ENCODE measurements at regions of chr11 and their contacts with region 1.

Region 1: GRCh38 chr11:85783758-85784157 is 27.2 kb downstream of the SYTL2 start:
- DNase-seq: no peak
- H3K4me3 ChIP-seq: no peak overlapping the region
- H3K27ac ChIP-seq: no peak overlapping the region
- H3K4me1 ChIP-seq: no peaks in the 10 kb centered on the region
- CTCF ChIP-seq: no peak

Region 2: DNA sequence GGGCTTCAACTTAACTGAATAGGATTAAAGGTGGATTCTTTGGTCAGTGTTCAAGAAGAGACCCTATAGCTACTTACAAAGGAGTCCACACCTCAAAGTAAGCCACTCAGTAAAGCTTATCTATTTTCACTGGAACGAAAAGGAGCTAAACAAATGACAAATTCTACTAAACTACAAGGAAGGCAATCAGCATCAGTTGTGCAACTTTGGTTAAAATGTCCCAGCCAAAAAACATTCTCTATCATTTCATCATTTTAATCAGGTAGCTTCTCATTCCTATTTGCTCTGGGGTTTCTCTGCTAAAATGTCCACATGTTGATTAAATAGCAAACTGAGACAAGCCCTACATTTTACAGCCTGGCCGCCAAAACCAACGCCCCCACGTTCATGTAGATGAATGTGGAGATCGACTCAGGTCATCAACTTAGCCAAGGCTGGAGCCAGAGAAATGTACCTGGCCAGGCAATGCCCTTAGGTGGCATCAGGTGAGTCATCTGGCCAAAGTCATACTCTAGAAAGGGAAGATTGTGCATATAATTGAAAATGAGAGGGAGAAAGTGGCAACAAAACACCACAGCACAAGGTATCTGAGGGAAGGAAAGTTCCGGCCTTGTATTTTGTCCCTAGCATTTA is 60.8 kb before region 1 on chr11:
- CTCF ChIA-PET with region 1: no interaction called
- POLR2A ChIA-PET with region 1: no interaction called
- intact Hi-C with region 1: loop called (anchors 2 kb)
- DNase-seq: no peak
- H3K4me3 ChIP-seq: no peak overlapping the region
- H3K27ac ChIP-seq: no peak overlapping the region
- H3K4me1 ChIP-seq: no peaks in the 10 kb centered on the region
- CTCF ChIP-seq: no peak

Region 3: GRCh38 chr11:85766721-85767161 is 17.0 kb before region 1 on chr11:
- CTCF ChIA-PET with region 1: no interaction called
- POLR2A ChIA-PET with region 1: no interaction called
- intact Hi-C with region 1: no loop called
- DNase-seq: no peak
- H3K4me3 ChIP-seq: no peak overlapping the region
- H3K27ac ChIP-seq: no peak overlapping the region
- H3K4me1 ChIP-seq: no peaks in the 10 kb centered on the region
- CTCF ChIP-seq: no peak

Region 4: DNA sequence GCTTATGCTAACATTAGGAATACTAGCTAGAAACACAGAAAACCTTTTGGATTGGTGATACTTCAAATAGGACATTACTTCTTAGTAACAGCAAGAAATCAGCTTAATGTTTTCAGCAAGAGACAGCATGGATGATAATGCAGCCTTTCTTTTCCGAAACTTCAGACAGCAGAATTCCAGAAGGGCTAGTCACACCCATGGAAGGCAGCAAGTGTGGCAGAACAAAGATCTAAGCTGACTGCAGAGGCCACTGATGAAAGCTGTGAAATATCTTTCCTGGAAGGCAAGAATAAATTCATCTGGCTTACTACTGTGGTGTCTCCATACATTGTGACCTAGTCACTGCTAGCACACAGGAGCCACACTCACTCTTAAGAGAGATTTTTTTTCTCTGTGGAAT is 171.8 kb after region 1 on chr11:
- CTCF ChIA-PET with region 1: no interaction called
- POLR2A ChIA-PET with region 1: no interaction called
- intact Hi-C with region 1: no loop called
- DNase-seq: no peak
- H3K4me3 ChIP-seq: no peak overlapping the region
- H3K27ac ChIP-seq: no peak overlapping the region
- H3K4me1 ChIP-seq: no peaks in the 10 kb centered on the region
- CTCF ChIP-seq: no peak